Activated naive CD4-positive, alpha-beta T cell treated with anti-CD3 and anti-CD28 coated beads for 36 hours (primary cell): ENCODE measurements at regions of chrX and their contacts with region 1.

Region 1: GRCh38 chrX:154712781-154713740 is 37.8 kb downstream of the GAB3 start:
- DNase-seq: peak; percentile 27
- H3K4me3 Mint-ChIP-seq: no peak overlapping the region
- H3K27ac Mint-ChIP-seq: no peak overlapping the region
- H3K4me1 Mint-ChIP-seq: peaks cover 15% of the 10 kb centered on the region
- H3K27me3 Mint-ChIP-seq: no peaks in the 10 kb centered on the region

Region 2: GRCh38 chrX:154734061-154734781 is 21.2 kb after region 1 on chrX:
- CTCF ChIA-PET with region 1: interaction called, 5 read pairs
- intact Hi-C with region 1: loop called (anchors 2 kb)
- DNase-seq: peak; percentile 37
- H3K4me3 Mint-ChIP-seq: peak overlapping the region; percentile 62
- H3K27ac Mint-ChIP-seq: peak overlapping the region; percentile 85
- H3K4me1 Mint-ChIP-seq: peaks cover 62% of the 10 kb centered on the region
- H3K27me3 Mint-ChIP-seq: no peaks in the 10 kb centered on the region

Region 3: DNA sequence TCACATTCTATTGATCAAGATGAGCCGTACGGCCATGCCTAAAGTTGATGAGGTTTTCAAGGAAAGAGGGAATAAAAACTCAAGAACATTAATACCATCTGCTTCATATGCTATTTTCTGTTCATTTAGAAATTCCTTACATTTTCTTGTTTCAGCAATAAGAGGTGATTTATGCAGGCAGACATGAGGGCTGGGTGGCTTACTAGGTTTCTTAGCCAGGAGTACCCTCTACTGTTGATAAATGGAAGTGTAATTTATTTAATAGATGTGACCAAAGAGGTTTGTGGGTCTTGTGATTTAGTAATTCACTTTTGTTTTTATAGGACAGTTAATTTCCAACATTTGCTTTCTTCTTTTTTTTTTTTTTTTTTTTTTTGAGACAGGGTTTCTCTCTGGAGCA is 127.8 kb after region 1 on chrX:
- CTCF ChIA-PET with region 1: no interaction called
- intact Hi-C with region 1: loop called (anchors 2 kb)
- DNase-seq: peak; percentile 8
- H3K4me3 Mint-ChIP-seq: no peak overlapping the region
- H3K27ac Mint-ChIP-seq: no peak overlapping the region
- H3K4me1 Mint-ChIP-seq: no peaks in the 10 kb centered on the region
- H3K27me3 Mint-ChIP-seq: no peaks in the 10 kb centered on the region